OCI-LY7 (cell line): ENCODE measurements at regions of chr1 and their contacts with region 1.

Region 1: DNA sequence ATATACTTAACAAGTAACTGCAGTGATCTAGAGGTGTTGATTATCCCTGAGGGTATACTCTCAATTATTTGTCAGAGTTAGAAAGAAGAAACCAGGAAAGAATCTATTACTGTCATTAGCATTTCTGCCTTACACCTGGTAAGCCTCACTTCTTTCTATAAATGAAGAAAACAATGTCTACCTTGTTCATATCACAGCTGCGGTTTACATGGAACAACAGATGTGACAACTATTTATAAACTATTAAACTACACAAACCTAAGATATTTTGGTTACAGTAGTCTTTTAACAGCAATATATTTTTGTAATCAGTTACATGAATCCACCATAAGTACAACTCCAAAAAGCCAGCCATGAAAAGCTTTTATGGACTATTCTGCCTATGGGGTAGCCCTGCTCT is 40.7 kb downstream of the GON4L start:
- DNase-seq: peak; percentile 57
- H3K4me3 ChIP-seq: peak overlapping the region; percentile 34
- H3K27ac ChIP-seq: peak overlapping the region; percentile 73
- H3K4me1 ChIP-seq: peaks cover 29% of the 10 kb centered on the region
- CTCF ChIP-seq: no peak

Region 2: DNA sequence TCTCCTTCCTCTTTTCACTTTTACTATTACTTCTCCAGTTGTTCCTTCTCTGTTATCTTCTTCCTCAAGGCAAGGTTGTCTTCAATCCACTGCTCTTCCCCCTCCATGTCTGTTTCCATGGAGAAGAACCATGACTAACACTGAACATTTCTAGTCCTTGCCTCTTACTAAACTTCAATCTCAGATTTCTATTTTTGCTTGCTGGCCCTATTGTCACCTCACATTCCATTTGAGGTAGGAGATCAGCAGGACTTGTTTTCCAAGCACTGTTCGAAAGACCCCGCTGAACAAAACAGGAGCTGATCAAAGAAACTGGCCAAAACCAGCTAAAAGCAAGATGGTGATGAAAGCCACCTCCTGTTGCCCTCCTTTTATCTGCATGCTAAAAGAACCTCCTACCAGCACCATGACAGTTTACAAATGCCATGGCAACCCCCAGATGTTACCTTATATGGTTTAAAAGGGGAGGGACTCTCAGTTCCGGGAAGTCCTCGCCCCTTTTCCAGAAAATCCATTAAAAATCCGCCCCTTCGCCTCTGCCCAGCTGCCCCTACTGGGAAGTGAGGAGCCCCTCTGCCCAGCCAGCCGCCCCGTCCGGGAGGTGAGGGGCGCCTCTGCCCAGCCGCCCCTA is 18.1 kb after region 1 on chr1:
- CTCF ChIA-PET with region 1: no interaction called
- POLR2A ChIA-PET with region 1: interaction called, 20 read pairs
- intact Hi-C with region 1: no loop called
- DNase-seq: no peak
- H3K4me3 ChIP-seq: no peak overlapping the region
- H3K27ac ChIP-seq: peak overlapping the region; percentile 58
- H3K4me1 ChIP-seq: peaks cover 47% of the 10 kb centered on the region
- CTCF ChIP-seq: no peak

Region 3: DNA sequence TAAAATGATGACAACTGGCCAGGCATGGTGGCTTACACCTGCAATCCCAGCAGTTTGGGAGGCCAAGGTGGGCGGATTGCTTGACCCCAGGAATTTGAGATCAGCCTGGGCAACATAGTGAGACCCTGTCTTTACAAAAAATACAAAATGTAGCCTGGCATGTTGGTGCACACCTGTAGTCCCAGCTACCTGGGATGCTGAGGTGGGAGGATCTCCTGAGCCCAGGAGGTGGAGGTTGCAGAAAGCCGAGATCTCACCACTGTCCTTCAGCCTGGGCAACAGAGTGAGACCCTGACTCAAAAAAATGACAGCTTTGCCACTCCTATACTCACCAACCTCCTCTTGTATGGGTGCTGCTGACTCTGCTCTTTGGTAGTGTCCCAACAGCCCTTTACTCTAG is 61.6 kb after region 1 on chr1:
- CTCF ChIA-PET with region 1: no interaction called
- POLR2A ChIA-PET with region 1: no interaction called
- intact Hi-C with region 1: no loop called
- DNase-seq: no peak
- H3K4me3 ChIP-seq: no peak overlapping the region
- H3K27ac ChIP-seq: no peak overlapping the region
- H3K4me1 ChIP-seq: peaks cover 50% of the 10 kb centered on the region
- CTCF ChIP-seq: no peak